ENCODE measurements at regions of chr10 and their contacts with region 1.

Region 1: DNA sequence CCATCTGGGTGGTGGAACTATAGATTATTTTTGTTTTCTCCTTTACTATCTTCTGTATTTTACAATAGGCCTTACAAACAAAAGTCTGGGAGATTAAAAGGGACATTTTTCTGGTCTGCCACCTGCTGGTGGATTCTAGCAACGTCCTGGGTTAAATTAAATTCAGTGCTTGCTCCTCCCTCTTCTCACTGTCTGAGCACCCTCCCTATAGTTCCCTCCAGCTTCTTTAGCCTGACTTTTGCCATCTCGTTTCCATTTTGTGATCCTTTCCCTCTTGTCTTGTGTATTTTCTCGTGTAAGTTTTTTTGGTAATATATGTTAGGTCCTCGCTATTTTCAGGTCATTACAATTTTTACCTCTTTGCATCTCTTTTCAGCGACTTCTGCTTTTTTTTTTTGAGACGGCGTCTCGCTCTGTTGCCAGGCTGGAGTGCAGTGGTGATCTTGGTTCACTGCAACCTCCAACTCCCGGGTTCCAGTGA is 16.1 kb downstream of the ANKRD16 start:
- DNase-seq: peak; percentile 36
- ATAC-seq: peak; percentile 88
- H3K4me3 ChIP-seq: no peak overlapping the region
- H3K27ac ChIP-seq: no peak overlapping the region
- H3K4me1 ChIP-seq: no peaks in the 10 kb centered on the region
- H3K27me3 ChIP-seq: no peaks in the 10 kb centered on the region
- CTCF ChIP-seq: peak; percentile 59 to 68 (median 63)
- POLR2A ChIP-seq: no peak
- RAD21 ChIP-seq: peak; percentile 68

Region 2: DNA sequence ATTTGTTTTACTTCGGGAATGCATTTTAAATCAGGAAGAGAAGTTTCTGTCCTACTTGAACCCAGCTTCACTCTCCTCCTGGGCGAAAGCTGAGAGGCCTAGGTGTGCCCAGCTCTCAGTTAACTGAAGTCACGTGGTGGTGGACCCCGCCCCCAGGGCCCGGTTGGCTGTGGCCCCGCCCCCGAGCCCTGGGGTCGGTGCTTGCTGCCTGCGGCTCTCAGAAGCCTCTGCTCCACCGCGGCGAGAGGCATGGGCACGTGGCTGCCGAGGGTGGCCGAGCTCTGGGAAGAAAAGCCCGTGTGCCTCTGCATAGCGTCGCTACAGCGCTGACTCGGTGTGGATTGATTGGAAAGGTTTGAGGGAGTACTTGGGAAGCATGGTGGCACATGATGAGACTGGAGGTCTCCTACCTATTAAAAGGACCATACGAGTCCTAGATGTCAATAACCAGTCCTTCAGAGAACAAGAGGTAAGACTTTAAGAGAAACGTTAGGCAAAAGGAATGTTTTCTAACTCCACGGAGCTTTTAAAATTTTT is 427.1 kb before region 1 on chr10:
- CTCF ChIA-PET with region 1: no interaction called
- POLR2A ChIA-PET with region 1: no interaction called
- RAD21 ChIA-PET with region 1: no interaction called
- intact Hi-C with region 1: loop called (anchors 5 kb)
- DNase-seq: peak; percentile 52
- ATAC-seq: peak; percentile 99
- H3K4me3 ChIP-seq: peak overlapping the region; percentile 37 to 52
- H3K27ac ChIP-seq: peak overlapping the region; percentile 15; the same call in 1 of the 2 replicates
- H3K4me1 ChIP-seq: peaks cover 10 to 29% of the 10 kb centered on the region in 2 experiments
- H3K27me3 ChIP-seq: no peaks in the 10 kb centered on the region
- CTCF ChIP-seq: no peak
- POLR2A ChIP-seq: no peak
- RAD21 ChIP-seq: peak; percentile 30; the same call in 1 of the 2 replicates

Region 3: DNA sequence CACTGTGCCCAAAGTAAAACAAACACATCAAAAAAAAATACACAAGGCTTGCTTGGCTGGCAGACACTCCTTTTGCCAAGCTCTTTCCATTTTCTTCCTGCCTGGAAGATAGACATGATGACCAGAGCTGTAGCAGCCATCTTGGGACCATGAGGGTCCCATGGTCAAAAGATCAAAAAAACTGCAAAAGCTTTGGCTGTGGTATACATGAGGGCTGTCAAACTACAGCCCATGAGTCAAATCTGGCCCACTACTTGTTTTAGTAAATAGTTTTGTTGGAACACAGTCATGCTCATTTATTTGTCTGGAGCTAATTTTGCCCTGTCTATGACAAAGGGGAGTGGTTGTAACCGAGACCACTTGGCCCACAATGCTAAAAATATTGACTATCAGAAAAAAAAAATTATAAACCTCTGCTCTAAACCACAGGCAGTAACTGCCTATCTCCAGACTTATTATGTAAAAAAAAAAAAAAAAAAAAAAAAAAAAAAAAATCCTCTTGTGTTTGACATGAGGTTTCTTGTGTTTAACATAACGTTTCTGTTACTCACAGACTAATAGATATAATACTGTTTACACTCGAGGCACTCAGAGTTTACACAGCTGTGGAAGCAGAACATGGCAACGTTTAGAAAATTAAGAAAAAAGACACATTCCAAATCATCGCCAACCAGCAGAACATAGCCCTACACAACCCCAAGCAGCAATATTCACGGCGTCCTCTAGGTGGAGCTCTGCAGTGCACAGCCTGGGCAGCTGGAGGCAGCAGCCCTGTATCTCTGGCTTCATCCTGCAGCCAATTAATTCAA is 244.0 kb before region 1 on chr10:
- CTCF ChIA-PET with region 1: interaction called, 3 read pairs
- POLR2A ChIA-PET with region 1: no interaction called
- RAD21 ChIA-PET with region 1: no interaction called
- intact Hi-C with region 1: loop called (anchors 5 kb)
- DNase-seq: peak; percentile 61
- ATAC-seq: peak; percentile 98
- H3K4me3 ChIP-seq: no peak overlapping the region
- H3K27ac ChIP-seq: no peak overlapping the region
- H3K4me1 ChIP-seq: peaks cover 7 to 15% of the 10 kb centered on the region in 2 experiments; a peak in 3 of 4 replicates
- H3K27me3 ChIP-seq: 0 out of 2 replicates have a peak, but pooled peaks cover 2% of the 10 kb centered on the region
- CTCF ChIP-seq: peak; percentile 76 to 91 (median 88)
- POLR2A ChIP-seq: no peak
- RAD21 ChIP-seq: peak; percentile 71

Region 4: GRCh38 chr10:5684318-5684970 is 189.1 kb before region 1 on chr10 and contains the start of gene TASOR2:
- CTCF ChIA-PET with region 1: no interaction called
- POLR2A ChIA-PET with region 1: no interaction called
- RAD21 ChIA-PET with region 1: no interaction called
- intact Hi-C with region 1: loop called (anchors 2 kb)
- DNase-seq: peak; percentile 94
- ATAC-seq: peak; percentile 90
- H3K4me3 ChIP-seq: peak within 1 kb of the TSS; percentile 71 to 89
- H3K27ac ChIP-seq: peak within 1 kb of the TSS; percentile 87
- H3K4me1 ChIP-seq: peaks cover 4 to 16% of the 10 kb centered on the region in 2 experiments; a peak in 3 of 4 replicates
- H3K27me3 ChIP-seq: no peaks in the 10 kb centered on the region
- CTCF ChIP-seq: no peak
- POLR2A ChIP-seq: peak; percentile 54
- RAD21 ChIP-seq: no peak
- total RNA-seq, gene TASOR2: 80.3 TPM

Region 5: GRCh38 chr10:5813287-5814109 is 60.1 kb before region 1 on chr10 and contains the start of gene GDI2:
- CTCF ChIA-PET with region 1: no interaction called
- POLR2A ChIA-PET with region 1: no interaction called
- RAD21 ChIA-PET with region 1: no interaction called
- intact Hi-C with region 1: loop called (anchors 1 kb)
- DNase-seq: peak; percentile 90
- ATAC-seq: peak; percentile 96
- H3K4me3 ChIP-seq: peak within 1 kb of the TSS; percentile 91 to 99
- H3K27ac ChIP-seq: peak within 1 kb of the TSS; percentile 85
- H3K4me1 ChIP-seq: peaks cover 11 to 27% of the 10 kb centered on the region in 2 experiments; a peak in 3 of 4 replicates
- H3K27me3 ChIP-seq: no peaks in the 10 kb centered on the region
- CTCF ChIP-seq: no peak
- POLR2A ChIP-seq: peak; percentile 86
- RAD21 ChIP-seq: no peak
- total RNA-seq, gene GDI2: 144 TPM

Region 6: GRCh38 chr10:5889624-5890451 is 16.3 kb after region 1 on chr10 and contains the starts of genes ANKRD16 and FBH1:
- CTCF ChIA-PET with region 1: interaction called, 12 read pairs
- POLR2A ChIA-PET with region 1: interaction called, 8 read pairs
- RAD21 ChIA-PET with region 1: no interaction called
- intact Hi-C with region 1: no loop called
- DNase-seq: peak; percentile 96
- ATAC-seq: peak; percentile 89
- H3K4me3 ChIP-seq: peak within 1 kb of the TSS; percentile 92 to 98
- H3K27ac ChIP-seq: peak within 1 kb of the TSS; percentile 78
- H3K4me1 ChIP-seq: peaks cover 11 to 20% of the 10 kb centered on the region in 2 experiments; a peak in 3 of 4 replicates
- H3K27me3 ChIP-seq: no peaks in the 10 kb centered on the region
- CTCF ChIP-seq: no peak
- POLR2A ChIP-seq: peak; percentile 93
- RAD21 ChIP-seq: no peak
- total RNA-seq, gene ANKRD16: 9.4 TPM
- total RNA-seq, gene FBH1: 70.2 TPM

Measured in HCT116 (cell line).